Heart right ventricle (tissue), 16 donors: ENCODE measurements at regions of chr4 and their contacts with region 1.

Region 1: GRCh38 chr4:130419211-130419975 is 1323.4 kb downstream of the C4orf33 start:
- DNase-seq: no peak
- ATAC-seq: no peak
- H3K4me3 ChIP-seq: no peak overlapping the region
- H3K27ac ChIP-seq: no peak overlapping the region
- H3K4me1 ChIP-seq: no peaks in the 10 kb centered on the region
- H3K27me3 ChIP-seq: no peaks in the 10 kb centered on the region
- CTCF ChIP-seq: no peak

Region 2: GRCh38 chr4:129502493-129502892 is 916.9 kb before region 1 on chr4:
- intact Hi-C with region 1: loop called in 1 of 10 experiments (anchors 10 kb)
- DNase-seq: no peak
- ATAC-seq: no peak
- H3K4me3 ChIP-seq: no peak overlapping the region
- H3K27ac ChIP-seq: no peak overlapping the region
- H3K4me1 ChIP-seq: no peaks in the 10 kb centered on the region
- H3K27me3 ChIP-seq: no peaks in the 10 kb centered on the region
- CTCF ChIP-seq: no peak